ENCODE measurements at regions of chr17 and their contacts with region 1.

Region 1: DNA sequence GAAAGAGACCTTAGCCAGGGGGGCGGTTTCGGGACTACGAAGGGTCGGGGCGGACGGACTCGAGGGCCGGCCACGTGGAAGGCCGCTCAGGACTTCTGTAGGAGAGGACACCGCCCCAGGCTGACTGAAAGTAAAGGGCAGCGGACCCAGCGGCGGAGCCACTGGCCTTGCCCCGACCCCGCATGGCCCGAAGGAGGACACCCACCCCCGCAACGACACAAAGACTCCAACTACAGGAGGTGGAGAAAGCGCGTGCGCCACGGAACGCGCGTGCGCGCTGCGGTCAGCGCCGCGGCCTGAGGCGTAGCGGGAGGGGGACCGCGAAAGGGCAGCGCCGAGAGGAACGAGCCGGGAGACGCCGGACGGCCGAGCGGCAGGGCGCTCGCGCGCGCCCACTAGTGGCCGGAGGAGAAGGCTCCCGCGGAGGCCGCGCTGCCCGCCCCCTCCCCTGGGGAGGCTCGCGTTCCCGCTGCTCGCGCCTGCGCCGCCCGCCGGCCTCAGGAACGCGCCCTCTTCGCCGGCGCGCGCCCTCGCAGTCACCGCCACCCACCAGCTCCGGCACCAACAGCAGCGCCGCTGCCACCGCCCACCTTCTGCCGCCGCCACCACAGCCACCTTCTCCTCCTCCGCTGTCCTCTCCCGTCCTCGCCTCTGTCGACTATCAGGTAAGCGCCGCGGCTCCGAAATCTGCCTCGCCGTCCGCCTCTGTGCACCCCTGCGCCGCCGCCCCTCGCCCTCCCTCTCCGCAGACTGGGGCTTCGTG is at the start of gene MAPT:
- DNase-seq: peak; percentile 80 to 98 (median 94)

Region 2: GRCh38 chr17:45841883-45842525 is 52.2 kb before region 1 on chr17:
- intact Hi-C with region 1: no loop called
- DNase-seq: no peak

Region 3: GRCh38 chr17:45852535-45853297 is 41.5 kb before region 1 on chr17:
- intact Hi-C with region 1: loop called (anchors 5 kb)
- DNase-seq: peak in 41 of 42 donors; percentile 52 to 93 (median 79)

Region 4: GRCh38 chr17:45948881-45949624 is 54.9 kb after region 1 on chr17:
- intact Hi-C with region 1: loop called (anchors 2 kb)
- DNase-seq: peak; percentile 39 to 92 (median 82)

Measured in head of caudate nucleus (tissue), 42 donors.